Activated T-helper 2 cell treated with anti-CD3 and anti-CD28 coated beads, Interferon-gamma antibody, Interleukin-2, Interleukin-4, amounts not matched to agents 10 μg/mL and 5 μg/mL and 100 μg/mL, durations not matched to agents 14 hours and 24 hours and 36 hours (primary cell): ENCODE measurements at regions of chr3 and their contacts with region 1.

Region 1: DNA sequence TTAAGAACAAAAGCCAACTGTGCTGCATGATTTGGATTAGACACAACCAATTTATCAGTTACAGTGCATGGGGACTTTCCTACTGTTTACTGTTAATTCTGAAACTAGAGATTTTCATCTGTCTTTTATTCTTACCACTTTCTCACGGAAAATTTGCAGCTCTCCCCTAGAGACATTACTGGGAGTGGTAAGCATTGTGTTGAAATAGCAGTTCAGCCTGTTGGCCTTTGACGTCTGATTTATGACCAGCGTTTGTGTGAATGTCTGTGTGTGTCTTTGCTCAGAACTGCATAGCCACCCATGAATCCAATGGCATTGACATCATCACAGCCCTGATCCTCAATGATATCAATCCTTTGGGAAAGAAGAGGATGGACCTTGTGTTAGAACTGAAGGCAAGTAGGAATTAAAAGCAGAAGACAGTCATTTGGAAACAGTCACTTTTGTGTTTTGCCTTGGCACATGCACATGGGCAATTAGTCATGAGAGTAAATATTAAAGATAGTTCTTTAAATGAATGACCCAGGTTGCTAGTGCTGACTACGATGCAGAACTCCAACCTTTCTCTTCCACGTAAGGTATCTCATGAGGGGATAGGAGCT is 202.2 kb upstream of the BHLHE40 start:
- DNase-seq: peak; percentile 37
- H3K4me3 Mint-ChIP-seq: peak overlapping the region; percentile 67
- H3K27ac Mint-ChIP-seq: peak overlapping the region; percentile 100
- H3K4me1 Mint-ChIP-seq: peaks cover 77% of the 10 kb centered on the region
- H3K27me3 Mint-ChIP-seq: no peaks in the 10 kb centered on the region

Region 2: DNA sequence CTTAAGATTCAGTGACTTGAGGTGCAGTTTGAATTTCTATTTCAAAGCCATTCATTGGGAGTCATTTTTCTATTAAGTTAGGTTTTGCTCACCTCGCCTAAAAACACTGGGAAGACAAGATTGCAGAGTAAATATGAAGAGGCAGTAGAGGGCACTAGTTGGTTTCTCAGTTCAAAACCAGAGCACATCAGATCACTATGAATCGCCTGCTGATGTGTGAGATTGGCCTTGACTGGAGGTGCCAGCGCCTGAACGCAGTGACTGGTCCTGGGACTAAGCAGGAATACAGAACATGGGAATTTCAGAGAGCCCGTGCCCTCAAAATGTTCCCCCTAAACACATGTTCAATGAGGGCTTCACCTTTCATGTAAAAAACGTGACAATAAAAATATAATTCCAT is 55.0 kb before region 1 on chr3:
- intact Hi-C with region 1: loop called (anchors 2 kb)
- DNase-seq: peak; percentile 23
- H3K4me3 Mint-ChIP-seq: no peak overlapping the region
- H3K27ac Mint-ChIP-seq: peak overlapping the region; percentile 63
- H3K4me1 Mint-ChIP-seq: peaks cover 53% of the 10 kb centered on the region
- H3K27me3 Mint-ChIP-seq: no peaks in the 10 kb centered on the region

Region 3: DNA sequence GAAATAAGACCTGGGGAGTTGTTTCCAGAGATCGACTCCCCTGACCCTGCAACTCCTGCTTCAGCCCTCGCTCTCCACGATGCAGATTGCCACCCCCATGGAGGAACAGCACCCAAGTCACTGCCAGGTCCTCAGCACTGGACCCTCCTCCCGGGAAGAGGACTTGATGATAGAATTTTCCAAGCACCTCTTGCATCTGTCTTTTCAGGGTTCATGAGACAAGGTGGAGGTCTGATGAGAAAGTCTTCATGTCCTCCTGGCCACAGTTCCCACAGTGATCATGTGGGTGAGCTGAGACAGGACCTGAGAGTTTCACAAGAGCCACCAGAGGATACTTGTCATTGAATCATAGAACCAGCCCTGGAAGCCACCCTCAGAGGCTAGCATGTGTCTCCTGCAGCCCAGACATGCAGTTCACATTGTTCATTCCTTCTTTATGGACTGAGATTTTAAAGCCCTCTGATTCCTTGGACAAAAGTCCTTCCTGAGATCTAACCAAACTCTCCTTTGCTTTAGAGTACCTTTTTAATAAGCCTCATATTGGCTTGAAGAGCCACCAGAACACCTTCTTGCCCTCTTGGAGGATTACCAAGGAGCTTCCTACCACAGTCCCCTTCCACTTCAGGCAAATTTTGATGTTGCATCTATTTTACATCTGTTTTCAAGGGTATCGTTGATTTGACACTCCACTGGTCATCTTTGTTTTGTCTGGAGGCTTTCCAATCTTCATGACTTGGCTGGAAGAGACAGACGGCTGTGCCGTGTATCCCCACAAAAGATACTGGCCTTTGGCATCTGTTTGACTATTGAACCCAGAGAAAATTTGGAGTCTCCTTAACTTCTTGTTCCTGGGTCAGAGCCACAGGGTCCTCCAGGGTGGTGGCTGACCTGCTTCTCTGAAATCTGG is 22.6 kb before region 1 on chr3:
- intact Hi-C with region 1: loop called (anchors 2 kb)
- DNase-seq: no peak
- H3K4me3 Mint-ChIP-seq: no peak overlapping the region
- H3K27ac Mint-ChIP-seq: peak overlapping the region; percentile 1
- H3K4me1 Mint-ChIP-seq: peaks cover 50% of the 10 kb centered on the region
- H3K27me3 Mint-ChIP-seq: no peaks in the 10 kb centered on the region

Region 4: DNA sequence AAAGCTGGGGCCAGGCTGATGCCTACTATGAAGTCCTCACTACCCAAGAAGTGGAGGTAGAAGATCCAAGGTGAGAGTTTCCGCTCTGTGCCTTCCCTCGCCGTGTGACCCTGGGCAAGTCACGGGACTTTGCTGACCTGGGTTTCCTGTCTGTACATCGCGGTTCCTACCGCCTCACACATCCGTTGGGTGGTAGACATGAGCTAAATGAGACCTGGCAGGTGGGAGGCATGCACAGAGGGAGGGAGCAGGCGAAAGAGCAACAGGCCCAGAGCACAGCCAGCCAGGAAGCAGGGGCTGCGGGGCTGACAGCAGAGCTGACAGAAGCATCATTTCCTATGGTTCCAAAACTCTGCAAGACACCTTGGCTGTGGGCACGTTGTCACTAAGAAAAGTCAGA is 44.9 kb after region 1 on chr3:
- intact Hi-C with region 1: loop called (anchors 1 kb)
- DNase-seq: peak; percentile 77
- H3K4me3 Mint-ChIP-seq: peak overlapping the region; percentile 20
- H3K27ac Mint-ChIP-seq: peak overlapping the region; percentile 93
- H3K4me1 Mint-ChIP-seq: peaks cover 84% of the 10 kb centered on the region
- H3K27me3 Mint-ChIP-seq: no peaks in the 10 kb centered on the region

Region 5: DNA sequence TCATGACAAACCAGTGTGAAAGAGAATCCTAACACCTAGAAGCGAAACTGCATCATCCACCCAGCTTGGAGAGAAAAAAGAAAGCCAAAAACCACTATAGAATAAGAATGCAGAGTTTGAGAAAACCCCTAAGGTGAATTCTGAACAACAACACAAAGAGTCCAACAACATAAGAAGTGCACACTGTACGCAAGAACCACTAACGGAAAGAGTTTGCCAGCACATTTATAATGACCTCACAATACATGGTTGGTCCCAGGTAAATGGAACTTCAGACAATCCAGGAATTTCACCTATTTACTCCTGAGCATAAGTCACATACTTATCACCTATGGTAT is 73.8 kb after region 1 on chr3:
- intact Hi-C with region 1: loop called (anchors 1 kb)
- DNase-seq: no peak
- H3K4me3 Mint-ChIP-seq: peak overlapping the region; percentile 28
- H3K27ac Mint-ChIP-seq: peak overlapping the region; percentile 97
- H3K4me1 Mint-ChIP-seq: peaks cover 81% of the 10 kb centered on the region
- H3K27me3 Mint-ChIP-seq: no peaks in the 10 kb centered on the region

Region 6: DNA sequence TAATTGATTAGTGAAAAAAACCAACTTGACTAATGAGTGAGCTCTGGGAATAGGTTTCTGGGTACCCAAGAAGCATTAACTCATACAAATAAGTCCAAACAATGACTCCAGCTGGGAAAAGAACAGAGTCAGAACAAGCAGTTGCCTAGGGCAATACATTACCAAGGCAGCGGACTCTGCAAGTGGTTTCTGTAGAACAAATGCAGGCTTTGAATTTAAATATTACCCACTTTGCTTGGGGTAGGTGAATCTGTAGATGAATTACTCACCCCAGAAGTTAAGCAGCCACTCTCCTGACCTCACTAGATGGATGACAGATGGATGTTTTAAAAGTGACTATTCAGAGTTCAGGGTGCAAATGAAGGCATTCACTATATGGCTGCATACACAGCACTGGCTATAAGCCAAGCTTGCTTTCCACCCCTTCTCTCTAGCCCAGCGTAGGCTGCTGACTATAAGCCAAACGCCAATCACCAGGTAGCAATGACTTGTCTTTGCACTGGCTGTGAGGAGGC is 129.1 kb after region 1 on chr3:
- intact Hi-C with region 1: loop called (anchors 5 kb)
- DNase-seq: no peak
- H3K4me3 Mint-ChIP-seq: peak overlapping the region; percentile 57
- H3K27ac Mint-ChIP-seq: peak overlapping the region; percentile 91
- H3K4me1 Mint-ChIP-seq: peaks cover 93% of the 10 kb centered on the region
- H3K27me3 Mint-ChIP-seq: no peaks in the 10 kb centered on the region